Activated CD4-positive, alpha-beta T cell treated with anti-CD3 and anti-CD28 coated beads, Interleukin-2, amount 10 ng/mL, durations not matched to agents 24 days and 14 days (primary cell): ENCODE measurements at regions of chr3 and their contacts with region 1.

Region 1: GRCh38 chr3:136196401-136197158 is 445 bp upstream of the MSL2 start:
- DNase-seq: peak; percentile 99
- H3K4me3 Mint-ChIP-seq: peak overlapping the region; percentile 98
- H3K27ac Mint-ChIP-seq: peak overlapping the region; percentile 96
- H3K4me1 Mint-ChIP-seq: peaks cover 43% of the 10 kb centered on the region
- H3K27me3 Mint-ChIP-seq: peaks cover 7% of the 10 kb centered on the region

Region 2: DNA sequence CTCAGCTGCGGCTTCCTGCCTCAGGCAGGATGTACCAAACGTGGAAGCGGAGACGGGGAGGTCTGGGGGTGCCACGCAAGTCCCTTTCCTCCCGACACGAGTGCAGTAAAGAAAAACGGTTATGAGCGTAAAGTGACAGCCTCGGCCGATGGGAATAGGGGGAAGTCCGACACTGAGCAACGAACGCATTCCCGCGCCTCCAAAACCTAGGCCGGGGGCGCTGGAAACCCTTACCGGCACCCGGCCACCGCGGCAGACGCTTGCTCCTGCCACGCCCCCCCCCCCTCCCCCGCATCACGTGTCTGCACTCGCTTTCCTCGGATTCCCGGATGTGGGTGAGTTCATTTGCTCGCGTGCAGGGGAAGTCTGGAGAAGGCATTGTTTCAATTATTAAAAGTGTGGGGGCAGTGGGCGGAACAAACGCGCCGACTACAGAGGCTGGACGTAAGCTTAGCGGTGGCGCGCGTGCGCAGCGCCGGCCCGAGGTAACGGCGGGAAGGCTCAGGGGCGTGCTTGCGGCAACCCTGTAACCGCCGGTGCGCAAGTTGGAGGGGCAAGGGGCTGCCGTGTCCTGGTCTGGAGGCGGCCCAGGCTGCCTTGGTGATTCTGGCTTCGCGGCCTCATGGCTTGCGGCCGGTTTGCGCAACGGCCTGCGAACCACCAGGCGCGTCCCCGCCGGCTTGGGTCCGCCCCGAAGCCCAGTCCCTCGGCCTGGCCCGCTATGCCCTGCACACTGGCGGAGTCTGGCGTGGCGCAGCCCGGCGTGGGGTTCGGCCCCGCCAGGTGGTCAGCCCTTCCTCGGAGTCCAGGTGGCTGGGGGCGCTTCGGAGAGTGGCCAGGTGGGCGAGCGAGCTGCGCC is 1710.6 kb before region 1 on chr3 and contains the starts of genes ANAPC13 and CEP63:
- intact Hi-C with region 1: loop called (anchors 2 kb)
- DNase-seq: peak; percentile 97
- H3K4me3 Mint-ChIP-seq: peak within 1 kb of the TSS; percentile 85
- H3K27ac Mint-ChIP-seq: peak within 1 kb of the TSS; percentile 98
- H3K4me1 Mint-ChIP-seq: peaks cover 38% of the 10 kb centered on the region
- H3K27me3 Mint-ChIP-seq: no peaks in the 10 kb centered on the region
- total RNA-seq, gene ANAPC13: 29.7 and 30.0 TPM in 2 replicates
- total RNA-seq, gene CEP63: 18.6 and 20.5 TPM in 2 replicates

Region 3: DNA sequence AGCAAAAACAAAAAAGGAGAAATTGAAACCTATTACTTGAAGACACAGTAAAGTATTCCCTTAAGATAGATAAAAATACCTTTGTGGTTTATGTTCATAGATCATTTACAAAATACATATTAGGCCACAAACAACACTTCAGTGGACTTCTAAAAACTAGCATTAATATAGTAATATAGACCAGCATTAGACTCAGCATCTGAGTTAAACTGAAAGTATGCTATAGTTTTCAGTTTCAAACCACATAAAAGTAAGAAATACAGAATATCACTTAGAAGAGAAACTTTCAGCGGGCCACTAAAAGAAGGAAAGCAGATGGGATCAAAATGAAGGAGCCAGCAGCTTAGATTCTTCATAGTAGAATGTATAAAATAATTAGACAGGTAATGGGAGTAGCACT is 87.1 kb before region 1 on chr3:
- intact Hi-C with region 1: no loop called
- DNase-seq: no peak
- H3K4me3 Mint-ChIP-seq: no peak overlapping the region
- H3K27ac Mint-ChIP-seq: no peak overlapping the region
- H3K4me1 Mint-ChIP-seq: peaks cover 5% of the 10 kb centered on the region
- H3K27me3 Mint-ChIP-seq: peaks cover 21% of the 10 kb centered on the region

Region 4: DNA sequence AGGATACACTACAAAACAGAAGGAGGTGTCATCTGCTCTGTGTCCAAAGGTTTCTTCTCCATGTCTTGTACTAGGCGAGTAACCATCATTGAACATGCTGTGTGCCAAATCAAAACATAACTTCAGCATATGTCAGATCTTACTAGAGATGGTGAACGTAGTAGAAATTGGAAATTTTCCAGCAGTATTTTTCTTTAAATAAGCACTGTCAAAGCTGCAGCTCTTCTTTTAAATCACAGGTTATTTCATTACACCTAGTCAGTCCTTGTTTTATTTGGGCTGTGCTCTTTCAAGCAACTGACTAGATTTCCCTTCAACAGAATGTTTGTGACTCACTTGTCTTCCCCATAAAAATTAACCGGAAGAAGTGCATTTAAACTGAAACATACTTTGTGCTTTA is 46.9 kb before region 1 on chr3:
- intact Hi-C with region 1: loop called (anchors 2 kb)
- DNase-seq: no peak
- H3K4me3 Mint-ChIP-seq: no peak overlapping the region
- H3K27ac Mint-ChIP-seq: peak overlapping the region; percentile 3
- H3K4me1 Mint-ChIP-seq: peaks cover 36% of the 10 kb centered on the region
- H3K27me3 Mint-ChIP-seq: no peaks in the 10 kb centered on the region

Region 5: DNA sequence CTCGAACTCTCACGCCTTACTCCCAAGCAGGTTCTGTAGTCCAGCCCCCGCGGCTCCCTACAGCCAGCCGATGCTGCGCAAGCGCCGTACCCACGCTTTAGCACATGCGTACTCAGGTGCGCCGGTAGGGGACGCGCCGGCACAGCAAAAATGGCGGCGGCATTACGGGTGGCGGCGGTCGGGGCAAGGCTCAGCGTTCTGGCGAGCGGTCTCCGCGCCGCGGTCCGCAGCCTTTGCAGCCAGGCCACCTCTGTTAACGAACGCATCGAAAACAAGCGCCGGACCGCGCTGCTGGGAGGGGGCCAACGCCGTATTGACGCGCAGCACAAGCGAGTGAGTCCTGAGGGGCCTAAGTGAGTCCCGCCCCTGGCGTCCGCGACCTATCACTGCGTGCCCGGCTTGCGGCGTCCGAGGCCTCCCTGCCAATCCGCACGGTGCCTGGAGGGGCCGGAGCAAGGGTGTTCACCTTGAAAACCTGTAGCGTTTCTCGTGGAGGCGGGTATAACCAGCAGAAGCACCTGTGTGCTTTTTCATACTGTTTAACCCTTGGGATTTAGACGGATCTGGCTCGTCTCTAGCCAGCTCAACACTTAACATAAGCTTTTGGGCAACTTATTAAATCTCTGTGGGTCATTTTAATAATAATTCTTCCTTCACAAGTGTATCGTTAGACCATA is 53.8 kb after region 1 on chr3 and contains the start of gene PCCB:
- intact Hi-C with region 1: loop called (anchors 1 kb)
- DNase-seq: peak; percentile 97
- H3K4me3 Mint-ChIP-seq: peak within 1 kb of the TSS; percentile 91
- H3K27ac Mint-ChIP-seq: peak within 1 kb of the TSS; percentile 95
- H3K4me1 Mint-ChIP-seq: peaks cover 16% of the 10 kb centered on the region
- H3K27me3 Mint-ChIP-seq: no peaks in the 10 kb centered on the region
- total RNA-seq, gene PCCB: 45.4 and 55.9 TPM in 2 replicates

Region 6: DNA sequence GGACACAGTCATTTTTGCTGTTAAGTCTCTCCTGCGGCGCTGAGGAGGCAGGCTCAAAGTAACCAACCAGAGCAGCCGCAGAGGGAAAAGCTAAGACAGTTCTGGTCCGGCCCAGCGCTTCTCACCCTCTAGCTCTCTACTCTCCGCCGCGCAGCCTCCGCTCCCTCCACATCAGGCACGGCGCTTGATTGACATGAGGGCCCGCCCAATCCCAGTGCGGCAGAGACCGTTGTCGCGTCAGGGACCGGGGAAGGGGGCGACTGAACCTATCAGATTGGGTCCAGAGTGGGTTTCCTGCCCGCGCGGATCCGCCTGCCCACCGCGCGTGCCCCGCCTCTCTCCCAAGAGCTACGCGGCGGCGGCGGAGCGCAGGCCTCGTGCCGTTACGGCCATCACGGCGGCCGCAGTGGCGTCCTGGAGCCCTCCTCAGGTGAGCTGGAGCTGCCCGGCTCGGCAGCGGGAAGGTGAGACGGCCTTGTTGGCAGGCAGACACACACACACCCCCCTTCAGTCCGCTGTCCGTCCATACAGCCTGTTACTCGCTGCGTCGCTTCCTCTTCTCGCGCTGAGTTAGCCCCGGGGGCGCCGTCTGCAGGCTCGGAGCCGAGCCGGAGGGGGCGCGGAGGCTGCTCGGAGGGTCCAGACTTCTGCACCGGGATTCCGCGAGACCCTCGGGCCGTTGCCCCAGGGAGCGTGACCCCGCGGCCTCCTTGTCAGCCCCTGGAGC is 665.5 kb after region 1 on chr3 and contains the start of gene NCK1:
- intact Hi-C with region 1: loop called (anchors 1 kb)
- DNase-seq: peak; percentile 99
- H3K4me3 Mint-ChIP-seq: peak within 1 kb of the TSS; percentile 97
- H3K27ac Mint-ChIP-seq: peak within 1 kb of the TSS; percentile 99
- H3K4me1 Mint-ChIP-seq: peaks cover 40% of the 10 kb centered on the region
- H3K27me3 Mint-ChIP-seq: no peaks in the 10 kb centered on the region
- total RNA-seq, gene NCK1: 34.7 and 35.3 TPM in 2 replicates

Region 7: GRCh38 chr3:137013955-137014688 is 817.5 kb after region 1 on chr3:
- intact Hi-C with region 1: loop called (anchors 2 kb)
- DNase-seq: peak; percentile 95
- H3K4me3 Mint-ChIP-seq: peak overlapping the region; percentile 77
- H3K27ac Mint-ChIP-seq: no peak overlapping the region
- H3K4me1 Mint-ChIP-seq: peaks cover 10% of the 10 kb centered on the region
- H3K27me3 Mint-ChIP-seq: peaks cover 3% of the 10 kb centered on the region